ENCODE measurements at regions of chr16 and their contacts with region 1.

Region 1: DNA sequence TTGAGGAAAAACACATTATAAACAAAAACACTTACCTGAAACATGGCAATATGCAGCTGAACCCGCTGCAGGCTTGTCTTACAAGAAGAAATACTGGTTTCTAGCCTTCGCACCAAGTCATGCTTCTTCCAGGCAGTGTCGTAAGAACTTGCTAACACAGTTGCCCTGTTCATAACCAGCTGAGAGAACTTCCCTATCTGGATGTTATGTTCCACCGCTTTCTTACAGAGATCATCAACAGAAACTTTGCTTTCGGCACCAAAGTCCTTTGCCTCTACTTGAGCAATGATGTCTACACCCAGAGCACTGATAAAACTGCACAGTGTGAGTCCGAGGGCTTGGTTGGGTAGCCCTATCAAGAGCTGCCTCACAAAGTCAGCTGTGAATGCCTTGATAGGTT is 27.9 kb upstream of the ARL6IP1 start:
- DNase-seq: no peak
- H3K4me3 Mint-ChIP-seq: no peak overlapping the region
- H3K27ac Mint-ChIP-seq: no peak overlapping the region
- H3K4me1 Mint-ChIP-seq: no peaks in the 10 kb centered on the region
- H3K27me3 Mint-ChIP-seq: no peaks in the 10 kb centered on the region
- CTCF ChIP-seq: no peak

Region 2: DNA sequence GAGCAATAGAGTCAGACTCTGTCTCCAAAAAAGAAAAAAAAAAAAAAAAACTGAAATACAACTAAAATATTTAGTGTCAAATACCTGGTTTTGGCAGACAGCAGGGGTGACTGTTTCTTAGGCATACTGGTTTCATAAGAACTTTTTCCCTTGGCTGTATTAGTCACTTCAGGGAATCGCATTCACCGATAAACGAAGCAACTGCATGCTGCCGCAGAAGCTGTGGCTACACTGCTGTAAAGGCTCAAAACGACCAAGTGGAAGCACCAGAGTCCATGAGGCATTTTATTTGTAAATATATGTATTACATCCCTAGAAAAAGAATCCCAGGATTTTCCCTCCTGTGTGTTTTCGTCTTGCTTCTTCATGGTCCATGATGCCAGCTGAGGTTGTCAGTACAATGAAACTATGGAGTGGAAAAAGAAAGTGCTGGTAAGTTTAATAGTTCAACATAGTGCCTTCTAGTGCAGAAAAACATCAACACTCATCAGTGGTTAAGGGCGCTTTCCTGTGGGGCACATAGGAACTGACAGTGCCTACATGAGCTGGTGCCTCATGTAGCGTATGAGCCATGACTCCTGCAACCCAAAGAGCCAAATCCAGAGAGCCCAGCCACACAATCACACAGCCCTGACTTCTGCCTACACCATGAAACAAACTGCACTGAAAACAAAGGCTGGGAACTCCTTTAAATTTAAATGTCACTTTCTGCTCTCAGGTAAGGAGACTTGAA is 46.4 kb before region 1 on chr16:
- CTCF ChIA-PET with region 1: no interaction called
- POLR2A ChIA-PET with region 1: no interaction called
- intact Hi-C with region 1: no loop called
- DNase-seq: no peak
- H3K4me3 Mint-ChIP-seq: no peak overlapping the region
- H3K27ac Mint-ChIP-seq: no peak overlapping the region
- H3K4me1 Mint-ChIP-seq: peaks cover 24% of the 10 kb centered on the region
- H3K27me3 Mint-ChIP-seq: no peaks in the 10 kb centered on the region
- CTCF ChIP-seq: no peak

Region 3: GRCh38 chr16:18839555-18839954 is 10.3 kb after region 1 on chr16:
- CTCF ChIA-PET with region 1: interaction called, 3 read pairs
- POLR2A ChIA-PET with region 1: interaction called, 10 read pairs
- intact Hi-C with region 1: no loop called
- DNase-seq: peak; percentile 91
- H3K4me3 Mint-ChIP-seq: peak overlapping the region; percentile 31
- H3K27ac Mint-ChIP-seq: peak overlapping the region; percentile 88
- H3K4me1 Mint-ChIP-seq: peaks cover 14% of the 10 kb centered on the region
- H3K27me3 Mint-ChIP-seq: no peaks in the 10 kb centered on the region
- CTCF ChIP-seq: no peak

Region 4: GRCh38 chr16:18855196-18855595 is 25.9 kb after region 1 on chr16:
- CTCF ChIA-PET with region 1: no interaction called
- POLR2A ChIA-PET with region 1: no interaction called
- intact Hi-C with region 1: no loop called
- DNase-seq: no peak
- H3K4me3 Mint-ChIP-seq: no peak overlapping the region
- H3K27ac Mint-ChIP-seq: no peak overlapping the region
- H3K4me1 Mint-ChIP-seq: no peaks in the 10 kb centered on the region
- H3K27me3 Mint-ChIP-seq: no peaks in the 10 kb centered on the region
- CTCF ChIP-seq: no peak